PC-3 (cell line): ENCODE measurements at regions of chr7 and their contacts with region 1.

Region 1: GRCh38 chr7:47482013-47482875 is 99.7 kb downstream of the TNS3 start:
- DNase-seq: peak; percentile 83
- ATAC-seq: peak; percentile 88
- H3K4me3 ChIP-seq: peak overlapping the region; percentile 6; the same call in 1 of the 2 replicates
- H3K27ac ChIP-seq: peak overlapping the region; percentile 80
- H3K4me1 ChIP-seq: peaks cover 38% of the 10 kb centered on the region
- H3K27me3 ChIP-seq: no peaks in the 10 kb centered on the region
- CTCF ChIP-seq: no peak

Region 2: DNA sequence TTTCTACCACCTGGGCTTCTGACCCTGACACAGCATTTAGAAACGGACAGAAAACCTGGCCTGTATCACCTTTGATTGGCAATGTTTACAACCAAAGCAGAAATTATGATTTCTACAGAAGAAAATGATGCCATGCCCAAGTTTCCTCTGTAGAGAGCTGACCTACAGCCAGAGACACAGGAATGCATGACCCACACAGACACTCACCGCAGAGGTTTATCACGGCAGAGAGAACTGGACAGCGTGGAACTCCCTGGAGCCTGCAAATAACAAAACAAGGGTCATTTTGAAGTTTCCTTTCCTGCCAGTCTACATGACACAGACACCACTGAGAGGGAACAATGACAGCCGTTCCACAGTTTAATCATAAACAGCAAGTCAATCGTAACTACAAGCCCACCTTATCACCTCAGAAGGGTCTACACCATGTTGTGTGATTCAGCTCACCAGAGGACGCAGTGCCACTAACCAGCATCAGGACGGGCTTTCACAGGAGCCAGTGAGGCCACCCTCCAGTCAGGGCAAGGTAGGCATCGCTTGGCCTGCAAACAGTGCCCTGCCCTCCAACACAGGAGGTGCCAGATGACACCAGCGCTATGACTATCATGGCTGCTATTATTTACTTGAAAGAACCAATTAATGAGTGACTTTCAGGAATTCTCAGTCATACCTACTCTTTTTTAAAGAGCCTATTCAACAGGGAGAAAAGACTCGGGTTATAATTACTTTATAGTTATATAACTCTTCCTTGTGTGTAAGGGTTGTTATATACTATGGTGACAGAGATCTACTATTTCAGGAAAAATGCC is 40.2 kb before region 1 on chr7:
- CTCF ChIA-PET with region 1: no interaction called
- POLR2A ChIA-PET with region 1: no interaction called
- intact Hi-C with region 1: no loop called
- DNase-seq: no peak
- ATAC-seq: no peak
- H3K4me3 ChIP-seq: no peak overlapping the region
- H3K27ac ChIP-seq: no peak overlapping the region
- H3K4me1 ChIP-seq: peaks cover 8% of the 10 kb centered on the region; the same call in 1 of the 2 replicates
- H3K27me3 ChIP-seq: no peaks in the 10 kb centered on the region
- CTCF ChIP-seq: no peak

Region 3: DNA sequence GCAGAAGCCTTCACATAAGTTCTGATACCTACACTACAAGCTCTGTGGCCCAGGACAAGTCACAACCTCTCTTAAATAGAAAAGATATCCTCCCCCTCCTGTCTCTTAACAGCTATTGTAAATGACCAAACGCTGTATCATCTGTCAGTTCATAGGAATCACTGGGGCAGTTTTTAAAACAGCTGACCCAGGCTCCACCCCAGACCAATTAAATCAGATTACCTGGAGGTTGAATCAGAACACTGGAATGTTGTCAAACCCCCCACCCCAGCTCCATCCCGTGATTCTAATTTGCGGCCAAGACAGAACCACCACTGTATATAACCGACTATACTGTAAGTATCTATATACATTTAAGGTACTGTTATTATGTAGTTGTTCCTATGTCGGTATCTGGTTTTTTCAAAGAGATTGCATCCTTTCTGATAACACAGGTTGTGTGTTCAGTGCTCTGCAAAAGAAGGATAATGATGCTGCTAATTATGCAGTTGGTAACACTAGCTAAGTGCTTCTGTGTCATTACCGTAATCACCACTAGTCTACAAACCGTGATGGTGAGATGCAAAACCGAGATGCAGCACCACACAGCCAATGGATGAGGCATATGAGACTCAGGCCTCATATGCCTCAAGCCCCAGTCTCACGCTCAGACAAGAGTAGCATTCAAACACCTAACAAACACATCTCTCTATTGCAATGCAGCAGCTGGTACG is 52.2 kb after region 1 on chr7:
- CTCF ChIA-PET with region 1: interaction called, 3 read pairs
- POLR2A ChIA-PET with region 1: interaction called, 3 read pairs
- intact Hi-C with region 1: loop called (anchors 1 kb)
- DNase-seq: peak; percentile 96
- ATAC-seq: peak; percentile 73
- H3K4me3 ChIP-seq: peak overlapping the region; percentile 25; the same call in 1 of the 2 replicates
- H3K27ac ChIP-seq: peak overlapping the region; percentile 61
- H3K4me1 ChIP-seq: peaks cover 63% of the 10 kb centered on the region
- H3K27me3 ChIP-seq: no peaks in the 10 kb centered on the region
- CTCF ChIP-seq: peak; percentile 39

Region 4: DNA sequence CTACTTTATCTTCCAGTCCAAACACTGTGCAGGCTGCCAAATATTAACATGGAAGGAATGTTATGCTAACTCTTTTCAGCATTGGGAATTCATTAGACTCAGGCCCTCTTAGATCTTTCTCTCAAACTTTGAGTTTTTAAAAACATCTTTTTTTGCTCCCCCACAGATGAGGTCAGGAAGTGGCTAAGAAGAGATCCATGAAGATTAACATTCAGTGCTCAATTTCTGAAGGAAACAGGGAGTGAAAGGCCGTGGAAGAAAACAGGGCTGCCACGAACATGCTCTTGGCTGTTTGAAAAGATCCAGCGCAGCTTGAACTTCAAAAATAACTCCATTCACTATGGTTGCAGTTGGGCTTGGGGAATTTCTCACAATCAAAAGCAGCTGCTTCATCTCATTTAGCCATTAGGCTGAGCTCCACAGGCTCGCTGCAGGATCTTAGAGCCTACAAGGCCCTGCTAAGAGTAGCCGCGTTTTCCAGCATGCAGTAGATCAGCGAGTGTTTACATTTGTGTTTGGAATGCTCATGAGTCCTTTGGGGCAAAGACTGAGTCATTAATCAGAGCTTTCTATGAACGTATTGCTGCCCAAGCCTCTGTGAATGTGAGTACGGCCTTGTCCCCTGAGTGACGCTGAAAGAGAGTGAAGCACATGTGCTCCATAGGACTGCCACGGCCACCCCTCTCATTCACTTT is 140.8 kb after region 1 on chr7:
- CTCF ChIA-PET with region 1: no interaction called
- POLR2A ChIA-PET with region 1: no interaction called
- intact Hi-C with region 1: no loop called
- DNase-seq: peak; percentile 25
- ATAC-seq: peak; percentile 46; the same call in 1 of the 2 replicates
- H3K4me3 ChIP-seq: no peak overlapping the region
- H3K27ac ChIP-seq: no peak overlapping the region
- H3K4me1 ChIP-seq: peaks cover 6% of the 10 kb centered on the region; the same call in 1 of the 2 replicates
- H3K27me3 ChIP-seq: no peaks in the 10 kb centered on the region
- CTCF ChIP-seq: no peak